Sigmoid colon (tissue), 7 donors: ENCODE measurements at regions of chrX and their contacts with region 1.

Region 1: GRCh38 chrX:50100188-50100587 is 100.6 kb downstream of the AKAP4 start:
- DNase-seq: no peak
- H3K4me3 ChIP-seq: no peak overlapping the region
- H3K27ac ChIP-seq: no peak overlapping the region
- H3K4me1 ChIP-seq: no peaks in the 10 kb centered on the region
- H3K27me3 ChIP-seq: no peaks in the 10 kb centered on the region
- CTCF ChIP-seq: peak in 1 of 4 experiments; percentile 13
- EP300 ChIP-seq: no peak
- POLR2A ChIP-seq: no peak

Region 2: GRCh38 chrX:50204364-50204899 is 104.2 kb after region 1 on chrX and contains the start of gene CCNB3:
- intact Hi-C with region 1: loop called (anchors 5 kb)
- DNase-seq: peak; percentile 81
- H3K4me3 ChIP-seq: peak within 1 kb of the TSS in 3 of 4 donors; percentile 31 to 35 (median 32)
- H3K27ac ChIP-seq: peak within 1 kb of the TSS in 2 of 4 donors; percentile 26 to 44
- H3K4me1 ChIP-seq: peaks cover 0 to 5% (median 2%) of the 10 kb centered on the region in 4 donors
- H3K27me3 ChIP-seq: no peaks in the 10 kb centered on the region
- CTCF ChIP-seq: peak in 3 of 4 experiments; percentile 52 to 58 (median 56)
- EP300 ChIP-seq: no peak
- POLR2A ChIP-seq: no peak
- total RNA-seq, gene CCNB3: 0.14 to 0.36 (median 0.22) TPM

Region 3: DNA sequence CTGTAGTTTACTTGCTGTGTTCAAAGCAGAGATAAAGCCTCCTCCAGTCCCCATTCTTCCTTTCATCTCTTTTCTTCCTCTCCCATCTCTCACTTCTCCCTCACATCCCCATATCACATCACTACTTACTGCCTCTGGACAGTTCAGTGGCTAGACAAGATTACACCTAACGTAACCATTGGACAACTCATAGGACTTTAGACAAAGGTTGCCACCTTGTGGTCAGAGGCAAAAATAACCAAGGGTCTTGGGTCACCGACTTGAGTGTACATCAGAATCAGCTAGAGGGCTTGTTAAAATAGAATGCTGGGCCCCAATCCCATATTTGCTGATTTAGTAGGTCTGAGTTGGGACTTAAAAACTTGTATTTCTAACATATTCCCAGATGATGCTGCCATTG is 479.8 kb after region 1 on chrX:
- intact Hi-C with region 1: loop called (anchors 2 kb)
- DNase-seq: no peak
- H3K4me3 ChIP-seq: no peak overlapping the region
- H3K27ac ChIP-seq: no peak overlapping the region
- H3K4me1 ChIP-seq: no peaks in the 10 kb centered on the region
- H3K27me3 ChIP-seq: no peaks in the 10 kb centered on the region
- CTCF ChIP-seq: peak in 3 of 4 experiments; percentile 14 to 33 (median 24)
- EP300 ChIP-seq: no peak
- POLR2A ChIP-seq: no peak

Region 4: DNA sequence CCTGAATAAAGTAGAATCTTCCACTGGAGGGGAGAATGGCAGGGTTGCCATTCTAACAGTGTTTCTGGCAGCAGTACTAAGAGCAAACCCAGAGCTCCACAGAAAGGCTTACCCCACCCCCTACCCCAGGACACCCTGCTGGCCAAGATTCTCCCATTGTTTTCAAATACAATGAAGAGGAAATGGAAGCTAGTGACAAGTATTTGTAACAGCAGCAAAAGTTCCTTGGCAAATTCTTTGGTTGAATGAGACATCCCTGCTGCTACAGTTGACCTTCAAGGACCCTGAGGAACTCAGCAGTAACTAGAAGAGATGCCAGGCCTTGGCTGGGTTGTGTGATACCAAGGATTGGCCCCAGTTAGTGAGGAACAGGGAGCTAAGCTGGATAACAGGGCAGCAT is 494.6 kb after region 1 on chrX:
- intact Hi-C with region 1: no loop called
- DNase-seq: no peak
- H3K4me3 ChIP-seq: no peak overlapping the region
- H3K27ac ChIP-seq: no peak overlapping the region
- H3K4me1 ChIP-seq: no peaks in the 10 kb centered on the region
- H3K27me3 ChIP-seq: no peaks in the 10 kb centered on the region
- CTCF ChIP-seq: no peak
- EP300 ChIP-seq: no peak
- POLR2A ChIP-seq: no peak